Tibial artery (tissue), 4 donors: ENCODE measurements at regions of chr6 and their contacts with region 1.

Region 1: DNA sequence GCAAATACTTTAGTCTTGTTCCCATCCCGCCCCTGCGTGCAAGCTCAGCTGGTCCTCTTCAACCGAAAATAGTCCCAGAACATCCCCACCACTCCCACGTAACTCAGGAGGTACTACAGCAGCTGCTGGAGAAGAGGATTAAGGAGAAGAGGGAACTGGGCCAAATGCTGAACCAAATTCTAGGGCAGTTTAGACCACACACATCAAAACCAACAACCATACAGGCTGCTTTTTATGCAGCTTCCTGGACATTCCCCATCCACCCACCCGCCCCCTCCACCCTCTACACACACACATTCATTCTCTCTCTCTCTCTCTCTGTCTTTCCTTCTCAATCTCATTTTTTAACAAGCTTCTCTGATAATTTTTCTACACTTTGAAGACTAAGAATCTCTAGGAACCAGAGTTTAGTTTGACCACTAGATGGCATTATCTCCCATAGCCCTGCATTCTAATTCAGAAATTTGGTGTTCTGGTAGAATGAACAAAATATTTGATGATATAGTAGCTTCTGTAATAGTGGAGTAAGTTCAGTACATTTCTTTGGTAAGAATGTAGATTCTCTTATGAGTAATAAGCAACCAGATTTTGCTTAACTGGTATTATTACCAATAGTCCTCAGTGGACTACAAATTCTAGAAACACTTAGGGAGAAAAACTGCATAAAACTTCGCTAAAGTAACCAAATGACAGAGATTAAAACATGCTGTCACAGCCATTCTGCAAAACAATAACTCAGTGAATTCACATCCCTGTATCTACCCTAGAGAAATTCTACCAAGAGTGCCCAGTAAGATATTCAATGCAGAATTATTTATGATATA is 52.1 kb upstream of the BEND6 start:
- DNase-seq: no peak
- H3K4me3 ChIP-seq: no peak overlapping the region
- H3K27ac ChIP-seq: no peak overlapping the region
- H3K4me1 ChIP-seq: peaks cover 0 to 7% (median 0%) of the 10 kb centered on the region in 4 donors
- H3K27me3 ChIP-seq: no peaks in the 10 kb centered on the region
- CTCF ChIP-seq: peak; percentile 54 to 74

Region 2: GRCh38 chr6:56821005-56821432 is 81.8 kb before region 1 on chr6:
- intact Hi-C with region 1: no loop called
- DNase-seq: no peak
- H3K4me3 ChIP-seq: no peak overlapping the region
- H3K27ac ChIP-seq: no peak overlapping the region
- H3K4me1 ChIP-seq: peaks cover 0 to 50% (median 0%) of the 10 kb centered on the region in 4 donors
- H3K27me3 ChIP-seq: no peaks in the 10 kb centered on the region
- CTCF ChIP-seq: no peak

Region 3: DNA sequence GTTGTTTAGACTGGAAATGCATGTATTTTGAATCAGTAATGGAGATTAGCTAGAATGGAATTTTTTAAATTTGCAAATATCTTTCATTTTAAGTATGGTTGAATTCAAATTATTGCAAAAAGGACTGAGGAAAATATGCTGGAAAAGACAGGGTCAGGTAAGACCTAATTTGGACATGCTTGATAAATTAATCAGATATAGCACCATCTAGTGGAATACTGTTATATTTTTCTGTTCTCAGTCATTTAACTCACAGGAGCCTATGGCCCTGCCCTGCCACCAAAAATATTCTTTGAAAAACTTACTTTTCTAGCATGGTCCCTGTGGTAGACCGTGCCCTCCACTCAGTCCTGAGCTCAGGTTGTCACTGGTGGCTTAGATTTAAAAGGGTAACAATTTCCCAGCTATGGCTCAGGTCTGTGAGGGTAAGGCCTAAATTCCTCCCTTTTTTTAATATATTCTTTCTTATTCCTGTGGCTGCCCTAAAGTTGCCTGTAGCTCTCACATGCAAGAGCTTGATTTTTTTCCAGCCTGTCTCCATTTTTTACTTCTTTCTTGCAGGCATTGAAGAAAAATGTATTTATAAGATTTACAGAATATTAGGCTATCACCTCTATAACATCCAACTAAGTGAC is 118.3 kb after region 1 on chr6:
- intact Hi-C with region 1: loop called (anchors 5 kb)
- DNase-seq: no peak
- H3K4me3 ChIP-seq: no peak overlapping the region
- H3K27ac ChIP-seq: no peak overlapping the region
- H3K4me1 ChIP-seq: no peaks in the 10 kb centered on the region
- H3K27me3 ChIP-seq: no peaks in the 10 kb centered on the region
- CTCF ChIP-seq: peak; percentile 55 to 60

Region 4: GRCh38 chr6:57190140-57190539 is 287.3 kb after region 1 on chr6:
- intact Hi-C with region 1: no loop called
- DNase-seq: no peak
- H3K4me3 ChIP-seq: no peak overlapping the region
- H3K27ac ChIP-seq: no peak overlapping the region
- H3K4me1 ChIP-seq: no peaks in the 10 kb centered on the region
- H3K27me3 ChIP-seq: no peaks in the 10 kb centered on the region
- CTCF ChIP-seq: peak; percentile 44 to 54

Region 5: DNA sequence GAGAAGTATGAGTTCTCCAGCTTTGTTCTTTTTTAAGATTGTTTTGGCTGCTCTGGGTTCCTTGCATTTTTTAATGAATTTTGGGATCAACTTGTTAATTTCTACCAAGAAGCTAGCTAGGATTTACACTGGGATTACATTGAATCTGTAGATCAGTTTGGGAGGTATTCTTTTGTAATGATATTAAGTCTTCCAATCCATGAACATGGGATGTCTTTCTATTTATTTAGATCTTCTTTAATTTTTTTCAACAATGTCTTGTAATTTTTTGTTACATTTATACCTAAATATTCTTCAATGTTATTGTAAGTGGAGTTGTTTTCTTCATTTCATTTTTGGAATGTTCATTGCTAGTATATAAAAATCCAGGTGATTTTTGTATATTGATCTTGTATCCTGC is 427.1 kb after region 1 on chr6:
- intact Hi-C with region 1: loop called (anchors 5 kb)
- DNase-seq: no peak
- H3K4me3 ChIP-seq: no peak overlapping the region
- H3K27ac ChIP-seq: no peak overlapping the region
- H3K4me1 ChIP-seq: no peaks in the 10 kb centered on the region
- H3K27me3 ChIP-seq: no peaks in the 10 kb centered on the region
- CTCF ChIP-seq: no peak